Activated T-helper 1 cell treated with anti-CD3 and anti-CD28 coated beads, Interleukin-12 subunit alpha, Interleukin-12 subunit beta, Interleukin-2, Interleukin-4 antibody, amounts not matched to agents 30 ng/mL and 10 ng/mL and 1 ng/mL, durations not matched to agents 14 hours and 24 hours and 36 hours (primary cell): ENCODE measurements at regions of chr5 and their contacts with region 1.

Region 1: GRCh38 chr5:151150471-151151262 is 6.9 kb downstream of the ANXA6 start:
- DNase-seq: peak; percentile 67
- H3K4me3 Mint-ChIP-seq: peak overlapping the region; percentile 71
- H3K27ac Mint-ChIP-seq: peak overlapping the region; percentile 96
- H3K4me1 Mint-ChIP-seq: peaks cover 95% of the 10 kb centered on the region
- H3K27me3 Mint-ChIP-seq: no peaks in the 10 kb centered on the region

Region 2: DNA sequence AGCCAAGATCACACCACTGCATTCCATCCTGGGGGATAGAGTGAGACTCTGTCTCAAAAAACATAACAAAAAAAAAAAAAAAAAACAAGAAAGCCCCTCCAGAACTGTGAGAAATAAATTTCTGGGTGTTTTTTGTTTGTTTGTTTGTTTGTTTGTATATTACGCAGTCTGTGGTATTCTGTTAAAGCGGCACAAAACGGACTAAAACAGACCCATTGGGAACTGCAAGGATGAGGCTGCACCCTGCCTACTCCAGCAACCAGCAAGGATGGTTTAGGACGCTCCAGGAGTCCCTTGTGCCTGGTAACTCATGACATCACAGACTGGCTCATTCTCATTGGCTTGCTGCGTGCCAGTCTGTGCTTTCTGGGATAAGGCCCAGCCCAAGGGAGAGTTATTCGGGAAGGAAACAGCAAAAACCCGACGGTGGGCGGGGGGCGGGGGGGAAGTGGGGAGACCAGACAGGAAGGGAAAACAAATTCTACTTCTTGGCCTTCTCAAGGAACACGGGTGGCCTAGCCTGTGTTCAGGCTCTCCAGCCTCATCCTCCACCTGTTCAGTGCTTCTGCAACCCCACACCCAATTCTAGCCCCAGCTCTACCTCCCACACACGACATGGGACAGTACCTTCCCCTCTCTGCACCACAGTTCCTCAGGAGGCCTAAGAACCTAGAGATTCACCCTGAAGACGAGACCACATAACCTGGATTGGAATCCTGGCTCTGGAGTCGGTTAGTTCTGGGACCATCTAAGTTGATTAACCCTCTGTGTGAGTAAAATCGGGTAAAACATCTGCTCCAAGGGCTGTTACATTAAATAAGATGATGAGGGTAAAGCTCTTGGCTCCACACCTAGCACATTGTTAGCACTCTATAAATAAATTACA is 740.8 kb before region 1 on chr5:
- intact Hi-C with region 1: loop called (anchors 5 kb)
- DNase-seq: peak; percentile 38
- H3K4me3 Mint-ChIP-seq: peak overlapping the region; percentile 91
- H3K27ac Mint-ChIP-seq: peak overlapping the region; percentile 98
- H3K4me1 Mint-ChIP-seq: peaks cover 45% of the 10 kb centered on the region
- H3K27me3 Mint-ChIP-seq: no peaks in the 10 kb centered on the region

Region 3: DNA sequence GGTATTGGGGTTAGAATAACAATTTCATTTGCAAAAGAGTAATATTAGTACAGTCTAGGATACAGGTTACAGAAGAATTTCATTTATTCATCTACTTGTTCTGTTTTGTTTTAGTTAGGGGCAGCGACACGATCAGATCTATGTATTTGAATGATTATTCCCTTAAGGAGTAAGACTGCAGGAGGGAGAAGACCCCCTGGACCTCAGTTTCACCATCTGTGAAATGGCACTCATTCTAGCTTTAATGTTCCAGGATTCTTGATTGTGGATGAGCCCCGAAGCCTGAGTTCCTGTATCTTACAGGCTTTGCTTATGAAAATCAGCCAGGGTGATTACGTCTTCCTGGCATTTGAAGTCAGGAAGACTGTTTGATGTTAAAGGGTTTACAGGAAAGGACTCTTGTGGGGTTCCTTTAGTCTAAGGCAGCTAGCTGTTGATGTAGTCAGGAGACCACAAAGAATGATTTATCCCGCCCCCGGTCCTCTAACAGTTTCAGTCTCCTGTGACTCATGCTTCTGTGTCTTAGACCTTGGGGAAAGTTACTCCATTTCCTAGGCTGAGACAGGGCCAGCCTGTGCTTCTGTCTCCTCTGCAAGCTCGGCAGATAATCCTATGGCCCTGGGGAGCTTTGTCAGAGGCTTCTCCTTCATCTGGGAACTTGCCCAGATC is 360.6 kb before region 1 on chr5:
- intact Hi-C with region 1: loop called (anchors 2 kb)
- DNase-seq: peak; percentile 63
- H3K4me3 Mint-ChIP-seq: peak overlapping the region; percentile 78
- H3K27ac Mint-ChIP-seq: peak overlapping the region; percentile 87
- H3K4me1 Mint-ChIP-seq: peaks cover 59% of the 10 kb centered on the region
- H3K27me3 Mint-ChIP-seq: no peaks in the 10 kb centered on the region

Region 4: DNA sequence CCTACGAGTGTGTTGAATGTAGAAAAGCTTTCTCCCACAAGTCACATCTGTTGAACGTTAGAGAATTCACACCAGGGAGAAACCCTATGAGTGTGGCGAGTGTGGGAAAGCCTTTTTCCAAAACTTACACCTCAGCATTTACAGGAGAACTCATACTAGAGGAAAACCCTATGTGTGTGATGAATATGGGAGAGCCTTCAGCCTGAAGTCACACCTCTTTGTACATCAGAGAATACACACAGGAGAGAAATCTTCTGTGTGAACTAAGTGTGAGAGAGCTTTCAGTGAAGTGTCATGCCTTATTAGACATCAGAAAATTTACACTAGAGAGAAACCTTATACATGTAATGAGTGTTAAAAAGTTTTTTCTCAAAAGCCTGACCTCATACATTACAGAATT is 172.1 kb before region 1 on chr5:
- intact Hi-C with region 1: no loop called
- DNase-seq: no peak
- H3K4me3 Mint-ChIP-seq: no peak overlapping the region
- H3K27ac Mint-ChIP-seq: no peak overlapping the region
- H3K4me1 Mint-ChIP-seq: no peaks in the 10 kb centered on the region
- H3K27me3 Mint-ChIP-seq: no peaks in the 10 kb centered on the region

Region 5: GRCh38 chr5:151068433-151069197 is 82.1 kb before region 1 on chr5:
- intact Hi-C with region 1: no loop called
- DNase-seq: no peak
- H3K4me3 Mint-ChIP-seq: peak overlapping the region; percentile 49
- H3K27ac Mint-ChIP-seq: peak overlapping the region; percentile 88
- H3K4me1 Mint-ChIP-seq: peaks cover 88% of the 10 kb centered on the region
- H3K27me3 Mint-ChIP-seq: no peaks in the 10 kb centered on the region

Region 6: DNA sequence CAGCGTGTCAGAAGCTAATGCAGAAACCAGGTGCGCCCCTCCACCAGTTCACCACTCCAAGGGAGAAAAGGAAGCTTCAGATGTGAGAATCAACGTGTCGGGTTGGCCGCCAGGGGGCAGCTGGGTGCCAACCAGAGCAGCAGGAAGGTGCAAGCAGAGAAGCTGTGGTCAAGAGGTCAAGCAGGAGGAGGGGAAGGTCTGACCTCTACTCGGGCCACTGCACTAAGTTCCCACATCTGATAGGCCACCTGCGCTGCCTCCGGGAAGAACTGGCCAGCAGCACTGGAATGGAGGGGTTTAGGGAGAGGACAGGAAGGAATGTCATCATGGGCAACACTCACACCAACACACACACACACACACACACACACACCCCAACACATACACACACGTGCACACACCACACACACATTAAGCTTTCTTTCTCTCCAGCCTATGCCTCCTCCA is 24.4 kb before region 1 on chr5:
- intact Hi-C with region 1: loop called (anchors 1 kb)
- DNase-seq: peak; percentile 38
- H3K4me3 Mint-ChIP-seq: no peak overlapping the region
- H3K27ac Mint-ChIP-seq: peak overlapping the region; percentile 42
- H3K4me1 Mint-ChIP-seq: peaks cover 43% of the 10 kb centered on the region
- H3K27me3 Mint-ChIP-seq: no peaks in the 10 kb centered on the region

Region 7: GRCh38 chr5:151213800-151214613 is 63.3 kb after region 1 on chr5:
- intact Hi-C with region 1: loop called (anchors 1 kb)
- DNase-seq: peak; percentile 83
- H3K4me3 Mint-ChIP-seq: peak overlapping the region; percentile 87
- H3K27ac Mint-ChIP-seq: peak overlapping the region; percentile 93
- H3K4me1 Mint-ChIP-seq: peaks cover 81% of the 10 kb centered on the region
- H3K27me3 Mint-ChIP-seq: no peaks in the 10 kb centered on the region

Region 8: GRCh38 chr5:151270599-151270998 is 119.9 kb after region 1 on chr5:
- intact Hi-C with region 1: loop called (anchors 1 kb)
- DNase-seq: peak; percentile 12
- H3K4me3 Mint-ChIP-seq: no peak overlapping the region
- H3K27ac Mint-ChIP-seq: no peak overlapping the region
- H3K4me1 Mint-ChIP-seq: no peaks in the 10 kb centered on the region
- H3K27me3 Mint-ChIP-seq: peaks cover 2% of the 10 kb centered on the region

Region 9: GRCh38 chr5:151550146-151550545 is 399.5 kb after region 1 on chr5:
- intact Hi-C with region 1: no loop called
- DNase-seq: no peak
- H3K4me3 Mint-ChIP-seq: no peak overlapping the region
- H3K27ac Mint-ChIP-seq: no peak overlapping the region
- H3K4me1 Mint-ChIP-seq: no peaks in the 10 kb centered on the region
- H3K27me3 Mint-ChIP-seq: peaks cover 2% of the 10 kb centered on the region